IMR-90 (cell line): ENCODE measurements at regions of chr1 and their contacts with region 1.

Region 1: DNA sequence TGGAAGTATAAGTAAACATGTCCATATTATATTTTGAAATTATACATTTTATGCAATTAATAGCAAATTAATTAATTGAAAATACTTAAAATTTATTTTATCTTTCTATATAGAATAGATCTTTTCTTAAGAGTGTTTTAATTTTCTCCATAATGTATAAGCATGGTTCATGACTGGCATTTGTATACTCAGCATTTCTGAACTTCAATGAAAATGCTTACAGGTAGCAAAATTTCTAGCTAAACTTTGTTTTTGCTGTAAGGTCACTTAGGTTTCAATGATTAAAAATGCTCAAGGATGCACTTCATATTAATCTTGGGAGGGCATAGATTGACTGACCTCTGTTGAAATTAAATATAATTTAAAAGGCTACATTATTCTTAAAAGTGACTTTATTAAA is 1108.1 kb downstream of the BRINP3 start:
- DNase-seq: no peak
- ATAC-seq: no peak
- H3K4me3 ChIP-seq: no peak overlapping the region
- H3K27ac ChIP-seq: no peak overlapping the region
- H3K4me1 ChIP-seq: no peaks in the 10 kb centered on the region
- H3K27me3 ChIP-seq: no peaks in the 10 kb centered on the region
- CTCF ChIP-seq: no peak
- POLR2A ChIP-seq: no peak
- RAD21 ChIP-seq: no peak

Region 2: DNA sequence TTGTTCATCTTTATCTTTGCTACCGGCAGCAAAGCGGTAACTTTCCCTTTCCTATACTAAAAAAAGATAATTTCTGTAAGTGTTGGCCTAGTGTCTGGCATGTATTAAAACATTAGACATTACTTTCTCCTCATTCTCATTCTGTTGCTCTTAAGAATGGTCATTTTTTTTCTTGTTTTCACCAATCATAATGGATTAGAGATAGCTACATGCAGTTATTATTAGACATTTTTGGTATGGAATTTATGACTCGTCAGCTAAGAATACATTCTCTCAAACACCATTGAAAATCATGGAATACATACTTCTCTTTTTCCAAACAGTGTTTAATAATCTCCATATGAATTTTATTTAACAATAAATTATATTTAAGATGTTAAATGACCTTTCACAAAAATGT is 46.5 kb before region 1 on chr1:
- CTCF ChIA-PET with region 1: no interaction called
- POLR2A ChIA-PET with region 1: no interaction called
- dilution Hi-C with region 1: no loop called
- in situ Hi-C with region 1: no loop called
- intact Hi-C with region 1: no loop called
- DNase-seq: peak; percentile 55
- ATAC-seq: peak; percentile 51
- H3K4me3 ChIP-seq: no peak overlapping the region
- H3K27ac ChIP-seq: no peak overlapping the region
- H3K4me1 ChIP-seq: no peaks in the 10 kb centered on the region
- H3K27me3 ChIP-seq: no peaks in the 10 kb centered on the region
- CTCF ChIP-seq: no peak
- POLR2A ChIP-seq: no peak
- RAD21 ChIP-seq: no peak

Region 3: DNA sequence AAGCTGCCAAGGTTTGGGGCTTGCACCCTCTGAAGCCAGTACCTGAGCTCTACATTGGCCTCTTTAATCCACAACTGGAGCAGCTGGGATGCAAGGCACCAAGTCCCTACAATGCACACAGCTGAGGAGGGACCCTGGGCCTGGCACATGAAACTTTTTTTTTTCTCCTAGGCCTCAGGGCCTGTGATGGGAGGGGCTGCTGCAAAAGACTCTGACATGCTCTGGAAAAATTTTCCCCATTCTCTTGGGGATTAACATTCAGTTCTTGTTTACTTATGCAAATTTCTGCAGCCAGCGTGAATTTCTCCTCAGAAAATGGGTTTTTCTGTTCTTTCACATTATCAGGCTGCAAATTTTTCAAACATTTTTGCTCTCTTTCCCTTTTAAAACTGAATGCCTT is 35.8 kb after region 1 on chr1:
- CTCF ChIA-PET with region 1: no interaction called
- POLR2A ChIA-PET with region 1: no interaction called
- dilution Hi-C with region 1: no loop called
- in situ Hi-C with region 1: no loop called
- intact Hi-C with region 1: loop called (anchors 1 kb)
- DNase-seq: no peak
- ATAC-seq: no peak
- H3K4me3 ChIP-seq: no peak overlapping the region
- H3K27ac ChIP-seq: no peak overlapping the region
- H3K4me1 ChIP-seq: no peaks in the 10 kb centered on the region
- H3K27me3 ChIP-seq: no peaks in the 10 kb centered on the region
- CTCF ChIP-seq: no peak
- POLR2A ChIP-seq: no peak
- RAD21 ChIP-seq: no peak